T-cell (primary cell): ENCODE measurements at regions of chr4 and their contacts with region 1.

Region 1: GRCh38 chr4:157052429-157053040 is 23.4 kb upstream of the GLRB start:
- DNase-seq: no peak
- ATAC-seq: no peak
- H3K4me3 ChIP-seq: no peak overlapping the region
- H3K4me3 Mint-ChIP-seq: no peak overlapping the region
- H3K27ac ChIP-seq: no peak overlapping the region
- H3K27ac Mint-ChIP-seq: no peak overlapping the region
- H3K4me1 ChIP-seq: no peaks in the 10 kb centered on the region
- H3K4me1 Mint-ChIP-seq: no peaks in the 10 kb centered on the region
- H3K27me3 ChIP-seq: no peaks in the 10 kb centered on the region
- H3K27me3 Mint-ChIP-seq: no peaks in the 10 kb centered on the region

Region 2: DNA sequence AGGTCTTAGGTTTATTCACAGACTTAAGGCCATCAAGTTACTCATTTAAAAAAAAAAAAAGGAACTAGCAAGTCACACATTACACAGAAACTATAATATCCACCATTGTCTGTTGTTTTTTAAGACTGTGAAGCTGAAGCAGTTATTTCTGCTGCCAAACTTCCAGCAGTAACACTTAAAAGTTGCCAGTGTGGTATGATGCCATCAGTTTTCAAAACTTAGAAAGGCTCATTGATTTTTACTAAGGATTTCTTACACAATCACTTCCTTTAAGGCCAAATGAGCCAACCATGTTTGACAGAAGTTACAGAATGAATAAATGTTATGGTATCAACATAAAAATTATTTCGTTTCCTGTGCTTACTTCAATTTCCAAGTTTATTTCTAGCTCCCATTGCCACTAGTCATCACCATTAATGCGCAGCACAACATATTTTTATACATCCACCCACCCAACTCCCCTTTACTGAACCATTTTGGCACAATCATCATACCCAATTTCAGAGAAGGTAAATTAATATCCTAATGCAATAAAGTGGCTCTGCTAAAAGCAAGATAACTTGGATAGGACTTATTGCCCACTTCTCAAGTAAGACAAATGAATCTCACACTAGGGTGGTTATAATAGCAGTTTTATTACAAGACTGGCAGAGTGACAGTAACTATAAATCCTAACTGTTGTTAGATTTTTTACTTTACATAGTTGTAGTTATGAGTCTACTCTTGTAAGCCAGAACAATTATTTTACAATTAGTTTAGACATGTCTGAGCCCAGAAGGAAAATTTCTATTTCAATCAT is 94.1 kb before region 1 on chr4:
- CTCF ChIA-PET with region 1: interaction called in 1 of 2 experiments, 12 read pairs
- POLR2A ChIA-PET with region 1: no interaction called
- DNase-seq: no peak
- ATAC-seq: no peak
- H3K4me3 ChIP-seq: no peak overlapping the region
- H3K4me3 Mint-ChIP-seq: no peak overlapping the region
- H3K27ac ChIP-seq: no peak overlapping the region
- H3K27ac Mint-ChIP-seq: no peak overlapping the region
- H3K4me1 ChIP-seq: no peaks in the 10 kb centered on the region
- H3K4me1 Mint-ChIP-seq: no peaks in the 10 kb centered on the region
- H3K27me3 ChIP-seq: no peaks in the 10 kb centered on the region
- H3K27me3 Mint-ChIP-seq: no peaks in the 10 kb centered on the region